ENCODE measurements at regions of chr17 and their contacts with region 1.

Region 1: DNA sequence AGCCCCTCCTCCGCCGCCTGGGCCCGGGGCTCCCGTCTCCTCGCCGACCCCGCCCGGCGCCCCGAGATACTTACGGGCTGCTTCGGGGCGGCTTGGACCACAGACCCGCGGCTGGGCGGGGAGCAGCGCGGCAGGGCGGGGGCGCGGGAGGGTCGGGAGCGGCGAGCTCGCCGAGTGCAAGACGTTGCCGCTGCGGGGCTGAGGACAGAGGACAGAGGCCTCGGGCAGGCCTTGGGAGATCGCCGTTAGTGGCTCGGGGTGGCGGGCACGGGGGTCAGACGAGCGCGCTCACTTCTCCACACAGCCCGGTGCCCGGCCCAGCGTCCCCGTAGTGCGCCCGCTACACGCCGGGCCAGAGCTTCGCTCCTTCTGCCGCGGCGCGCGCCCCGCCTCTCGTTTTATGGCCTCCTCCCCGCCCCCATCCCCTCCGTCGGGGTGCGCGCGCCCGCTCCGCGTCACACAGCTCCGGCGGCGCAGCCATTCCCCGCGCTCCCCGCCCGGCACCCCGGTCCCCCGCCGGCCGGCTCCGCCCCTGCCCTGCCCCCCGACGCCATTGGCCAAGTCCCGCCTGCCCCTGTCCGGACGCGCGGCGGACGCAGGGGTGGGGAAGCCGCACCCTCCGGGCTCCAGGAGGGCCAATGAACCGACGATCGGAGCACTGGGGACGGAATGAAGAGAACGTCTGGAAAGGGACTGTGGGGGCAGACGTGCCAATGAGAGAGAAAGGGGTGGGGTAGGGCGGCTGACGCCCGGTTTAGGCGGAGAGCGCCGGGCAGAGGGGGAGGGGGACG is at the start of gene TOB1:
- DNase-seq: peak; percentile 100
- H3K4me3 Mint-ChIP-seq: peak within 1 kb of the TSS; percentile 78
- H3K27ac Mint-ChIP-seq: peak within 1 kb of the TSS; percentile 100
- H3K4me1 Mint-ChIP-seq: peaks cover 29% of the 10 kb centered on the region
- H3K27me3 Mint-ChIP-seq: no peaks in the 10 kb centered on the region
- CTCF ChIP-seq: no peak
- total RNA-seq, gene TOB1: 177 and 241 TPM in 2 replicates

Region 2: DNA sequence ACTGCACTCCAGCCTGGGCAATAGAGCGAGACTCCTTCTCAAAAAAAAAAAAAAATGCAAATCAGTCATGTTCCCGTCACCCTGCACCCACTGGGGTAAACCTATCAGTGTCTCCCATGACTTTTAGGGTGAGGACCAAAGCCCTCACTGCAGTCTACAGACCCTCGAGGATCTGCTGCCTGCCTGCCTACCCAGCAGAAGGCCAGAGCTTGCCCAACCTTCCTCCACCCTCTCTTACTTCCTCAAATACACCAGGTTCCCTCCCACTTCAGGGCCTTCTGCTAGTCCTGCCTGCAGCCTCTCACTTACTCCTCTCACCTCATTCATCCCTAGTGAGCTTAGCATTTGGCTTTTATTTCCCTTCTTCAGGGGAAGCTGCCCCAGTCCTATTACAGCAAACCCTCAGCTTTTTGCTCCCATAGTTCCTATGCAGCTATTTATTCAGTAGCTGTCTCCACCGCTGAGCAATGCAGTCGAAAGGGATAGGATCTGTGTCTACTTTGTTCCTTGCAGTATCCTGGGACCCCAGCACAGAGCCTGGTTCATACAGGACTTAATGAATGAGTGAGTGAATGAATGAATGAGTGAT is 17.8 kb after region 1 on chr17:
- CTCF ChIA-PET with region 1: interaction called, 20 read pairs
- intact Hi-C with region 1: no loop called
- DNase-seq: peak; percentile 39
- H3K4me3 Mint-ChIP-seq: no peak overlapping the region
- H3K27ac Mint-ChIP-seq: peak overlapping the region; percentile 59
- H3K4me1 Mint-ChIP-seq: peaks cover 44% of the 10 kb centered on the region
- H3K27me3 Mint-ChIP-seq: no peaks in the 10 kb centered on the region
- CTCF ChIP-seq: no peak

Region 3: DNA sequence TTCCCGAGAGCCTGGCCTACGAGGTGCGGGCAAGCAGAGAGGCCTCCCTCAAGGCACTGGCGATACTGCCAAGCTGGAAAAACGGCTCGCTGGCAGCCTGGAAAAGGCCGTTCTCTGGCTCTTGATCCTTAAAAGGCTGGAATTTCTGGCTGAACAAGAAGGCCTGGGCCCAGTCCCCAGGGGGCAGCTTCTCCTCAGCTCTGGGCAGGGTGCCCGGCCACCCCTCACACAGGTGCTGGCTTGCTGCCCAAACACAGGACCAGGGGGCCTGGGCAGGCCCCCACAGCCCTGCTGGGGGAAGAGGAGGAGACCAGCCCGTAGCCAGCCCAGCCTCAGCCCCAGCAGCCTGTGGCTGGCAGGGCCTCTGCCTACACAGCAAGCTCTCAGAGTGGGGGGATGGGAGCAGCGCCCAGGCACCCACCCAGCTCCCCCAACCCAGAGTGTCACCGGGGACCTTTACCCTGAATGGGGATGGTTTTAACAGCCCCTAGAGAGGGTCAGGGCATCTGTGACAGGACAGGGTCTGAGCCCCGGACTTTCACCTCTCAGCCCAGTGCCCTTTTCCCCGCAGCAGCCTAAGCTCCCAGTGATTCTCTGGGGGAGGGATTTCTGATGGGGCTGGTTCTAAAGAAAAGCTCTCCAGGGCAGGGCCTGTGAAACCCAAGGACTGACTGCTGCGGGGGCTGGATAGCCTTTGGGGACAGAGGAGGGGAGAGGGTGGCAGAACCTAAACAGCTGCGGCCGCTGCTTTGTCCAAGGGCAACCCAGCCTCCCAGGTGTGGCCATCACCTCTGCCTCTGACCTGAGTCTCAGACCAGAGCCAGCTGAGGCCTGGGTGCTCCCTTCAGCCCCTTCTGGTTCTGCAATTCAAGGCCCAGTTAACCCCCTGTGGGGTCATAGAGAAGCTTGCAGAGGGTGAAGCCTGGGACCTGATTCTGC is 38.6 kb after region 1 on chr17:
- CTCF ChIA-PET with region 1: interaction called, 18 read pairs
- intact Hi-C with region 1: loop called (anchors 5 kb)
- DNase-seq: peak; percentile 86
- H3K4me3 Mint-ChIP-seq: peak overlapping the region; percentile 38
- H3K27ac Mint-ChIP-seq: peak overlapping the region; percentile 89
- H3K4me1 Mint-ChIP-seq: peaks cover 73% of the 10 kb centered on the region
- H3K27me3 Mint-ChIP-seq: no peaks in the 10 kb centered on the region
- CTCF ChIP-seq: peak; percentile 33

Region 4: GRCh38 chr17:50944054-50944901 is 78.1 kb after region 1 on chr17:
- CTCF ChIA-PET with region 1: interaction called, 68 read pairs
- intact Hi-C with region 1: no loop called
- DNase-seq: peak; percentile 94
- H3K4me3 Mint-ChIP-seq: peak overlapping the region; percentile 68
- H3K27ac Mint-ChIP-seq: no peak overlapping the region
- H3K4me1 Mint-ChIP-seq: peaks cover 55% of the 10 kb centered on the region
- H3K27me3 Mint-ChIP-seq: no peaks in the 10 kb centered on the region
- CTCF ChIP-seq: no peak

Region 5: GRCh38 chr17:50956750-50957523 is 90.8 kb after region 1 on chr17:
- CTCF ChIA-PET with region 1: interaction called, 11 read pairs
- intact Hi-C with region 1: no loop called
- DNase-seq: peak; percentile 80
- H3K4me3 Mint-ChIP-seq: no peak overlapping the region
- H3K27ac Mint-ChIP-seq: no peak overlapping the region
- H3K4me1 Mint-ChIP-seq: peaks cover 4% of the 10 kb centered on the region
- H3K27me3 Mint-ChIP-seq: no peaks in the 10 kb centered on the region
- CTCF ChIP-seq: peak; percentile 94

Region 6: DNA sequence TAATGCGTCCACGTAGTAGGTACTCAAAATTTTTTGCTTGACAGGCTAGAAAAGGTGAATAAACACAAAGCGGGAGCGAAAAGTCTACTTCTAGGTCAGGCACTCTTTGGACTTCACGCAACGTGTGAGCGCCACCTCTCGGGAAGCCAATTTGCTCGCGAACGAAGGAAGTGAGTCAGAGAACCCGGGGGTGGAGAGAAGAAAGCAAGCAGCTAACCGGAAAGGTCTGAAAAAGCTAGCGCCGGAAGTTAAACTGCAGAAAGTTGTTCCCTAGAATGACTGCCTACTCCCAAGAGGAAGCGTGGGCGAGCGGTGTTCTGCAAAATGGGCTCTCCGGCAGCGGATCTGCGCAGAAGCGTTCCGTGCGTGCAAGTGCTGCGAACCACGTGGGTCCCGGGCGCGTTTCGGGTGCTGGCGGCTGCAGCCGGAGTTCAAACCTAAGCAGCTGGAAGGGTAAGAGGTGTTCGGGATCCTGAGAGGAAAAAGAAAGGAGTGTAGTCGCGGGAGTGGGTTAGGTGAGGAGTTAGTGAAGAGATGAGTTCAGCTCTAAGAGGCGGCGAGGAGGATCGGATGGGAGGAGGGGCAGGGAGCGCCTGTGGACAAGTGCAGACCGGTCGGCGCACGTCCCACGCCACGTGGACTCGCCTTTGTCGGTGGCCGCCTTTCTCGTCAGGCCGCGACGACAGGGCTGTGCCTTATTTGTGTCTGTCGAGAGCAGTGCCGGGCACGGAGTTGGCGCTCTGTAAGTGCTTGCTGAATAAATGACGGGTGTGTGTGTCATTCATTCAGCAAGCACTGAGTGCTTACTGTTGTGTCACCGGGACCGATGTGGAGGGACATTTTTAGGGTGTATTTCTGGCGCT is 287.3 kb after region 1 on chr17 and contains the start of gene NME1:
- CTCF ChIA-PET with region 1: interaction called, 3 read pairs
- intact Hi-C with region 1: loop called (anchors 10 kb)
- DNase-seq: peak; percentile 99
- H3K4me3 Mint-ChIP-seq: no peak within 1 kb of the TSS
- H3K27ac Mint-ChIP-seq: no peak within 1 kb of the TSS
- H3K4me1 Mint-ChIP-seq: no peaks in the 10 kb centered on the region
- H3K27me3 Mint-ChIP-seq: no peaks in the 10 kb centered on the region
- CTCF ChIP-seq: peak; percentile 89
- total RNA-seq, gene NME1: 351 and 365 TPM in 2 replicates

Measured in Calu3 (cell line).